Activated CD4-positive, alpha-beta memory T cell treated with anti-CD3 and anti-CD28 coated beads, Interleukin-2, amount 10 ng/mL, durations not matched to agents 7 days and 5 days (primary cell): ENCODE measurements at regions of chr6 and their contacts with region 1.

Region 1: GRCh38 chr6:43570876-43571441 is 4.9 kb downstream of the XPO5 start:
- DNase-seq: no peak
- H3K4me3 Mint-ChIP-seq: peak overlapping the region; percentile 2
- H3K27ac Mint-ChIP-seq: peak overlapping the region; percentile 87
- H3K4me1 Mint-ChIP-seq: peaks cover 44% of the 10 kb centered on the region
- H3K27me3 Mint-ChIP-seq: no peaks in the 10 kb centered on the region

Region 2: DNA sequence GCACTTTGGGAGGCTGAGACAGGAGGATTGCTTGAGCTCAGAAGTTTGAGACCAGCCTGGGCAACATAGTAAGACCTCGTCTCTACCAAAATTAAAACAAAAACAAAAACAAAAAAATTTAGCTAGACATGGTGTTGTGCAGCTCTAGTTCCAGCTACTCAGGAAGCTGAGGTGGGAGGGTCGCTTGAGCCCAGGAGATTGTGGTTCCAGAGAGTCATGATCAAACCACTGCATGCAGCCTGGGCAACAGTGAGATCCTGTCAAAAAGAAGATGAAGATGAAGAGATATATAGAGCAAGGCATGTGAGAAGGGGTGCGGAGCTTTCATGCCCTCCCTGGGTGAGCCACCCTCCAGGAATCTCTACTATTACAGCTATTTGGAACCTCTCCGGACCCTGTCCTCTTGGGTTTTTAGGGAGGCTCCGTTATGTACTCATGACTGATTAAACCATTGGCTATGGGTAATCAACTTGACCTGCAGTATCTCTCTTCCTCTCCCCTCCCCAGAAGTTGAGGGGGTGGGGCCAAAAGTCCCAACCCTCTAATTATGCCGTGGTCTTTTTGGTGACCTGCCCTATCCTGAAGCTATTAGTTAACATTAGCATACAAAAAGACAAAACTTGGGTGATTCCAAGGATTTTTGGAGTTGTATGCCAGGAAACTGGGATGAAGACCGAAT is 14.1 kb after region 1 on chr6:
- CTCF ChIA-PET with region 1: interaction called, 6 read pairs
- POLR2A ChIA-PET with region 1: interaction called, 26 read pairs
- DNase-seq: peak; percentile 80
- H3K4me3 Mint-ChIP-seq: peak overlapping the region; percentile 25
- H3K27ac Mint-ChIP-seq: peak overlapping the region; percentile 94
- H3K4me1 Mint-ChIP-seq: peaks cover 50% of the 10 kb centered on the region
- H3K27me3 Mint-ChIP-seq: no peaks in the 10 kb centered on the region